Activated CD4-positive, alpha-beta T cell treated with anti-CD3 and anti-CD28 coated beads for 36 hours (primary cell): ENCODE measurements at regions of chr10 and their contacts with region 1.

Region 1: DNA sequence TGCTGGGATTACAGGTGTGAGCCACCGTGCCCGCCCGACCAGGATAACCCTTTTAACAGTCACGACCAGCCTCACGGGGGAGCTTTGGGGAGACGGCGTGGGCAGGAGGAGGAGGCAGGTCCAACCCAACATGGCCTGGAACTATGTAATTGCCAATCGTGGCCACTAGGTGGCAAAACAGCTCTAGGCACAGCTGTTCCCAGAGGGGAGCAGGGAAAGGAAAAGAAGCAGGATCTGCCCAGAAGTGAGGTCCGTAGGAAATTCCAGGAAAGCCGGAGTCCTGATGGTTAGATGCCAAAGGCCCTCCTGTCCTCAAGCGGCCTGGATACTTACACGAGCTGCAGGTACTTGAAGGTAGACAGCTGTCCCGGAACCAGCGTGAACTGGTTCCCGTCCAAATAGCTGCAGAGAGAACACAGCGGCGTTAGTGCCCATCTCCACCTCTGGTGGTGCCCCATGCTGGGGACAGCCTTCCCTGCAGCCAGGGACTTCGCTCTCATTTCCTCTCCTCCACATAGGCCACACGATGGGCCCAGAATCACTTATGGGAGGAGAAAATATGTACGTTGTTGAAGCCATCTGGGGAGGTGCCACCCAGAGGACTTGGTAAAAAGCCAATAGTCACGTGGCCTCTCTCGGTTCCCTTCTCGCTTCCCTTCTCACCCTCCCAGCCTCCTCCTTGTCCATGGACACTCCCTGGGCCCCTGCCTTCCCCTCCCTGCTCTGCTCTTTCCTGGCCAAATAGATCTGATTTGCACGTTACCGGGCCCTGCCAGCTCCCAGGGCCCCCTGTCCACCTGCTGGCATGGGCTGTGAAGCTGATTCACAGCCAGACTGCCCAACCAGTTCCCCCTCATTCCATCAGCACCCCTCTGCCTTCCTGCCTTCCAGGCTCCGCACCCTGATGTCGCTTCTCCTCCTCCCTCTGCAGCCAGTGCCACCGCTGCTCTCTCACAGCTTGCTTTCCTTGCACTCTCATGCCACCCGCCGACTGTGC is 148.1 kb downstream of the SLIT1 start:
- DNase-seq: peak; percentile 87
- ATAC-seq: peak; percentile 96
- H3K4me3 Mint-ChIP-seq: peak overlapping the region; percentile 45
- H3K27ac Mint-ChIP-seq: no peak overlapping the region
- H3K4me1 Mint-ChIP-seq: peaks cover 12% of the 10 kb centered on the region
- H3K27me3 Mint-ChIP-seq: no peaks in the 10 kb centered on the region

Region 2: DNA sequence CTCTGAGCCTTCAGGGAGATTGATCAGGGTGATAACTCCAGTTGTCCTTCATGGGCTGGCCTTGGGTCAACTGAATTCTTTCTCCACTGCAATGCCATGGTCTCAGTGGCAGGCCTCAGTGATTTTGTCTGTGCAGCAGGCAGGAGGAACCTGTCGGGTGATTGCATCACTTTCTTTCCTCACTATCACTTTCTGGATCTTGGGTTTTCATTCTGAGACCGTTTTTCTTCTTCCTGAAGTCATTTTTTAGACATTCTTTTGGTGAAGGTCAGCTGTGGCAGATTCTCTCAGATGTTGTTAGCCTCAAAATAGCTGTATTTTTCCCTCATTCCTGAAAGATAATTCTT is 234.4 kb before region 1 on chr10:
- CTCF ChIA-PET with region 1: no interaction called
- POLR2A ChIA-PET with region 1: no interaction called
- intact Hi-C with region 1: no loop called
- DNase-seq: no peak
- ATAC-seq: no peak
- H3K4me3 Mint-ChIP-seq: no peak overlapping the region
- H3K27ac Mint-ChIP-seq: no peak overlapping the region
- H3K4me1 Mint-ChIP-seq: no peaks in the 10 kb centered on the region
- H3K27me3 Mint-ChIP-seq: peaks cover 2% of the 10 kb centered on the region

Region 3: GRCh38 chr10:97016728-97017473 is 20.8 kb before region 1 on chr10:
- CTCF ChIA-PET with region 1: interaction called, 15 read pairs
- POLR2A ChIA-PET with region 1: no interaction called
- intact Hi-C with region 1: no loop called
- DNase-seq: peak; percentile 67
- ATAC-seq: peak; percentile 74
- H3K4me3 Mint-ChIP-seq: peak overlapping the region; percentile 15
- H3K27ac Mint-ChIP-seq: peak overlapping the region; percentile 72
- H3K4me1 Mint-ChIP-seq: peaks cover 11% of the 10 kb centered on the region
- H3K27me3 Mint-ChIP-seq: no peaks in the 10 kb centered on the region

Region 4: GRCh38 chr10:97050205-97050745 is 12.6 kb after region 1 on chr10:
- CTCF ChIA-PET with region 1: interaction called, 22 read pairs
- POLR2A ChIA-PET with region 1: no interaction called
- intact Hi-C with region 1: no loop called
- DNase-seq: no peak
- ATAC-seq: no peak
- H3K4me3 Mint-ChIP-seq: no peak overlapping the region
- H3K27ac Mint-ChIP-seq: no peak overlapping the region
- H3K4me1 Mint-ChIP-seq: peaks cover 3% of the 10 kb centered on the region
- H3K27me3 Mint-ChIP-seq: peaks cover 3% of the 10 kb centered on the region

Region 5: DNA sequence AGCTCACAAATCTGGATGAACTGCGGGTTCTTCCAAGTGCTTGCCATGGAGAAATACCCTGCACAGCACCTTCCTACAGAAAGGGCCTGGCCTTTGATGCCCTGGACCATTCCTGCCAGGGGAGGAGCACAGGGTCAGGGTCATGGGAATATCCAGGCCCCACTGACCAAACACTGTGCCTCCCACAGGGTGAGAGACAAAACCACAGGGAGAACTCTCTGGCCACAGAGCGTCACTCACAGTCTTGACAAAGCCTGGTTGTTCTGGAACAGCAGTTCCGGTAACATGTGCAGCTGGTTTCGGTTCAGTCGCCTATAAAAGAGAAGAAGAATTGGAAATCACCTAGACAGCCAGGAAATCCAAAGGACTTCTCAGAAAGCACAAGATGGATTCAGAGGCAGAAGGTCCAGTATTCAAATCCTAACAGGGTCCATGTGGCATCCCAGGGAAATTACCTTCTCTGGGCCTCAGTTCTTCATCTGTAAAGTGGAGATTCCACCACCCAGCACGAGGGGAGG is 120.0 kb after region 1 on chr10:
- CTCF ChIA-PET with region 1: no interaction called
- POLR2A ChIA-PET with region 1: no interaction called
- intact Hi-C with region 1: no loop called
- DNase-seq: no peak
- ATAC-seq: no peak
- H3K4me3 Mint-ChIP-seq: no peak overlapping the region
- H3K27ac Mint-ChIP-seq: no peak overlapping the region
- H3K4me1 Mint-ChIP-seq: no peaks in the 10 kb centered on the region
- H3K27me3 Mint-ChIP-seq: no peaks in the 10 kb centered on the region

Region 6: DNA sequence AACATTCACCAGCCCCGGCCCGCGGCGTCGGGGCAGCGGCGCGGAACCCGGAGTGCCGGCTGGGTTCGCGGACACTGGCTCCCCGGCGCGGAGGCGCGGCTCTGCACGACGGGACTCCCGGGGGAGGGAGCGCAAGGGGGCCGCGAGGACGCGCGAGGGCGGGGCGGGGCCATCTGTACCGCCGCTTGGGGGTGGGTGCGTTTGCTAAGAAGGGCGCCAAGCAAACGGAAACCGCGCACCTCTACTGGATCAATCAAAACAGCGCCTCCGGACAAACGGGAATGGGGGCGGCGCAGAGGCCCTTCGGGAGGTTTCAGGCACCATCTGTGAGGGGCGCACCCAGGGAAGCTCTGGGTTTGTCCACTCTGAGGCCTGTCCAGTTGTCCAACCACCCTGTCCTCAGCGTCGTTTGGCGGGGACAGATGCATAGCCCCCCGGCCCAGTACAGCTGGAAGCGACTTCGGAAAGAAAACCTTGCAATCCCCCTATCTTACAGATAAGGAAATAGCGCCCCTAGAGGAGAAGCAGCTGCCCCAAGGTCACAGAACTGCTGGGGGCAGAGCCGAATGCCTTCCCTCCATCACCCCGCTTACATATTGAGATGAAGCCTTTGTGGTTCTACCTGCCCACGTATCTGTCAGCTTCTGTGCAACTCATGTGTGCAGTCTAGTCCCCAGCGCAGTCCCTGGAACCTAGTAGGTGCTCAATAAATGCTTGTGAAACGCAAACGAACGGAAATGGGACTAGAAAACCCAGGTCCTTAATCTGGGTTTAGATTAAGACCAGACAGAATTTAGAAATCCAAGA is 158.8 kb after region 1 on chr10:
- CTCF ChIA-PET with region 1: interaction called, 13 read pairs
- POLR2A ChIA-PET with region 1: no interaction called
- intact Hi-C with region 1: no loop called
- DNase-seq: peak; percentile 77
- ATAC-seq: peak; percentile 93
- H3K4me3 Mint-ChIP-seq: peak overlapping the region; percentile 62
- H3K27ac Mint-ChIP-seq: no peak overlapping the region
- H3K4me1 Mint-ChIP-seq: peaks cover 4% of the 10 kb centered on the region
- H3K27me3 Mint-ChIP-seq: peaks cover 11% of the 10 kb centered on the region